Aorta (tissue), 5 donors: ENCODE measurements at regions of chr1 and their contacts with region 1.

Region 1: GRCh38 chr1:10941891-10942541 is 70.4 kb upstream of the TARDBP start:
- DNase-seq: peak; percentile 62 to 89
- ATAC-seq: no peak
- H3K4me3 ChIP-seq: no peak overlapping the region
- H3K27ac ChIP-seq: no peak overlapping the region
- H3K4me1 ChIP-seq: no peaks in the 10 kb centered on the region
- H3K27me3 ChIP-seq: no peaks in the 10 kb centered on the region

Region 2: GRCh38 chr1:10494754-10495474 is 447.1 kb before region 1 on chr1:
- intact Hi-C with region 1: loop called (anchors 10 kb)
- DNase-seq: peak; percentile 78 to 93
- ATAC-seq: peak; percentile 85
- H3K4me3 ChIP-seq: no peak overlapping the region
- H3K27ac ChIP-seq: no peak overlapping the region
- H3K4me1 ChIP-seq: no peaks in the 10 kb centered on the region
- H3K27me3 ChIP-seq: no peaks in the 10 kb centered on the region

Region 3: DNA sequence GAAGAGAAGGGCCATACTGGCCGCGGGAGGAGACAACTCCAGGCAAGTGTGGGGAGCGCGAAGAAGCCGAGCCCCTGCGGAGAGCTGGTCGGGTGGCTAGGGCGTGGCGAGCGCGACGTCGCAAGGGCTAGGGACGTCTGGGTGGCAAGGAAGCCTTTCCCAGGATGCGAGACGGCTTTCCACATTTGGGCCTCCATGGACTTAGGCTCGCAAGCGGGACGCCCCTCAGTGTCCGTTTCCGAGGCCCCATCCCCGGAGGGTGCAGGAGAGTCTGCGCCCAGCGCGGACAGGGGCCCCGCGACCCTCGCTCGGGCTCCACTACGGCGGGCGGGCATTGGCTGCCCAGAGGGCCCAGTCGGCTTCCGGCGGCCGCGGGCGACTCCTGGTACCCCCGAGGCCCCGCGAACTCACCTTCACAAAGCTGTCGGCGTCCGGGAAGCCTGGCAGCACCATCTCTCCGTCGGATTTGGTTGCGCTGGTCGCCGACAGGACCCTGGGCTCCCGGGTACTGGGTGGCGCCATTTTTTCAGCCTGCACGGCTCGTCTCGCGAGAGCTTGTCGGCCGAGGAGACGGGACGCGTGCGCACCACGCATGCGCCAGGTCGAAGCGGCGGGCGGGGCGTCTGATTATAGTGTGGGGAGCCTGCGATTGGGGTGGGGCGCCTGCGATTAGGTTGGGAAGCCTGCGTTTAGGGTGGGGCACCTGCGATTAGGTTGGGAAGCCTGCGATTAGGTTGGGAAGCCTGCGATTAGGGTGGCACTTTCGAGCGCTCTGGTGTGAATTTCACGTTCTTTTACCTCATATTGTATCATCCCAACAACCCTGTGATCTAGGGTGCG is 157.5 kb after region 1 on chr1 and contains the start of gene EXOSC10:
- intact Hi-C with region 1: no loop called
- DNase-seq: peak; percentile 95 to 98
- ATAC-seq: peak; percentile 99
- H3K4me3 ChIP-seq: peak within 1 kb of the TSS; percentile 61 to 90
- H3K27ac ChIP-seq: peak within 1 kb of the TSS in 1 of 2 donors; percentile 28
- H3K4me1 ChIP-seq: no peaks in the 10 kb centered on the region
- H3K27me3 ChIP-seq: no peaks in the 10 kb centered on the region
- total RNA-seq, gene EXOSC10: 45.3 to 53.8 TPM